ENCODE measurements at regions of chr17 and their contacts with region 1.

Region 1: DNA sequence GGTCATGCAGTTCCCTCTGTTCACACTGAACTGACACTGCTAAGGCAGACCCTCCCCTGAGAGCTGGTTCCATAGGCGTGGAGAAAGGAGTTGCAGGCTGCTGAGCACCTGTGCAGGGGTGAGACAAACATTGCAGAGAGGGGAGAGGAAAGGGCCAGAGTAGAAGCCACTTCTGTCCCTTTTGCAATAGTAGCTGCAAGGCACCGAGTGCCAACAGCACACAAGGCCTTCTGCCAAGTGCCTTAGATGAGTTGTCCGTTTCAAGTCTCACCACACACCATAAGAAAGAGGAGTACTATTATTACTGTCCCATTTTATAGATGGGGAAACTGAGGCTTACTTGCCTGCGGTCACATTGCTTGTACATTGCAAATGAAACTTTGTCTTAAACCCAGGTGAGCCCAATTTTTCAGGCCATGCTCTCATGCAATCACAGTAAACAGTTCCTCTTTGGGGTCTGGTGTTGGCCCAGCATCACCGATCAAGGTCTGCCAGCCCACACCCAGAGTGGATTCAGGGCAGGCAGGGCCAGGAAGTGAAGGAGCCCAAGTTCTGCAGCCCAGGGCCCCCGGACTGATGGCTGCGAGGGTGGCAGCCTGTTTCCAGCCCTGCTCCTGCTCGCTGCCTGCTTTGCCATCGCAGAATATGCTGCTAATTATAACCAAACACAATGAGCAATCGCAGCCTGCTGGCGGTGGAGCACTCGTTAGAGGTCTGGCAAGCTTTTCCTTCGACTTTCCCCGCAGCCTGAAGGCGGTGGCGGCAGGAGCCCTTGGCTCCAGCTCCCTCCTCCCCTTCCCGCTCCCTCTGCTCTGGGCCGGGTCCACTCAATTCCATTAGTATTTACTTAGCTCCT is 36.8 kb upstream of the DYNLL2 start:
- DNase-seq: no peak
- ATAC-seq: peak; percentile 75

Region 2: GRCh38 chr17:57649731-57650484 is 396.6 kb before region 1 on chr17:
- intact Hi-C with region 1: no loop called
- DNase-seq: no peak
- ATAC-seq: no peak

Region 3: DNA sequence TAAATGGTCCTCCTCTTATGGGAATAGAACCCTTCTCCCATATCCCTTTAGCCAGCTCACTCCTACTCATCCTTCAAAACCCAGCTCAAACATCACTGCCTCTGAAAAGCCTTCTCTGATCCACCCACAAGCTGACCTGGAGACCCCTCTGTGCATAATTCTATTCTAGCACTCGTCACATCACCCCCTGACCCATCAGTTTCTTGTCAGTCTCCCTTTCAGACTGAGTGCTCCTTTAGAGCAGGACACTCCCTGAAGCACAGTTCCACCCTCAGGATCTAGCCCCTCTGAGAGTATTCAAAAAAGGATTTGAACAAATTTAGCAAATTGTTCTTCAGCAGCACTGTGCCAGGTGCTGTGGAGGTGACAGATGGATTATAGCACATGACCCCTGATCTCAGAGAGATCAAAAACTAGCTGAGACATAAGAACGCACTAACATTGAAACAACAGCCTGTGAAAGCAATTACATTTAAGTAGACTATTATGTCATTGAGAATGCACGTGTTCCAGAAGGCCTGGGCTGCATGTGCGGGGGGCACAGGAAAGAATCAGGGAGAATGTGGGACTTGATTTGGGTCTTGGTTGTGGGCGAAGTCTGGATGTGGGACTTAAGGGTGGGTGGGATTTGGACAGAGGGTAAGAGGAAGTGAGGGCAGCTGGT is 240.2 kb before region 1 on chr17:
- intact Hi-C with region 1: loop called (anchors 5 kb)
- DNase-seq: no peak
- ATAC-seq: no peak

Region 4: GRCh38 chr17:58060596-58061191 is 14.2 kb after region 1 on chr17:
- intact Hi-C with region 1: no loop called
- DNase-seq: peak; percentile 85
- ATAC-seq: peak; percentile 88

Region 5: DNA sequence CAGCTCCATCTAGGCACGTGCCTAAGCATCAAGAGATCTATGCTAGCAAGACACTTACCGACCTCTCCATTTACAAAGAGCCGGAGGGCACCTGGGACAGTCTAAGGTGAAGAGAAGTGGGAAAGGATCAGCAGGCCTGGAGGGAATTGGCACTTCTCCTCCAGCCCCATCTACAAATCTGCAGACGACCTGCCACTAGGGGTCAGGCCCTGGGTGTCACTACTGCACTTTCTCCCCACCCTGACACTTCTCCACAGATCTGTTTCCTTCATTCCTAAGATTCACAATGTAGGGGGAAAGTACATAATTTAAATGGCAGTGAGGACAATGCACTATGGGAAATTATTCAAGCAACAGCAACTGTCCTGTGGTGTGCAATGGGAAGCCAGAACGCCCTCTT is 164.5 kb after region 1 on chr17:
- intact Hi-C with region 1: no loop called
- DNase-seq: no peak
- ATAC-seq: no peak